Dorsolateral prefrontal cortex (tissue), 120 donors: ENCODE measurements at regions of chr6 and their contacts with region 1.

Region 1: GRCh38 chr6:36094753-36095496 is 35.4 kb upstream of the MAPK13 start:
- DNase-seq: peak; percentile 75 to 89 (median 82)
- H3K4me3 ChIP-seq: peak overlapping the region in 10 of 59 donors; percentile 3 to 34 (median 17)
- H3K27ac ChIP-seq: peak overlapping the region in 19 of 59 donors; percentile 0 to 71 (median 29)
- H3K27me3 ChIP-seq: no peaks in the 10 kb centered on the region
- CTCF ChIP-seq: peak; percentile 93 to 99 (median 98)

Region 2: DNA sequence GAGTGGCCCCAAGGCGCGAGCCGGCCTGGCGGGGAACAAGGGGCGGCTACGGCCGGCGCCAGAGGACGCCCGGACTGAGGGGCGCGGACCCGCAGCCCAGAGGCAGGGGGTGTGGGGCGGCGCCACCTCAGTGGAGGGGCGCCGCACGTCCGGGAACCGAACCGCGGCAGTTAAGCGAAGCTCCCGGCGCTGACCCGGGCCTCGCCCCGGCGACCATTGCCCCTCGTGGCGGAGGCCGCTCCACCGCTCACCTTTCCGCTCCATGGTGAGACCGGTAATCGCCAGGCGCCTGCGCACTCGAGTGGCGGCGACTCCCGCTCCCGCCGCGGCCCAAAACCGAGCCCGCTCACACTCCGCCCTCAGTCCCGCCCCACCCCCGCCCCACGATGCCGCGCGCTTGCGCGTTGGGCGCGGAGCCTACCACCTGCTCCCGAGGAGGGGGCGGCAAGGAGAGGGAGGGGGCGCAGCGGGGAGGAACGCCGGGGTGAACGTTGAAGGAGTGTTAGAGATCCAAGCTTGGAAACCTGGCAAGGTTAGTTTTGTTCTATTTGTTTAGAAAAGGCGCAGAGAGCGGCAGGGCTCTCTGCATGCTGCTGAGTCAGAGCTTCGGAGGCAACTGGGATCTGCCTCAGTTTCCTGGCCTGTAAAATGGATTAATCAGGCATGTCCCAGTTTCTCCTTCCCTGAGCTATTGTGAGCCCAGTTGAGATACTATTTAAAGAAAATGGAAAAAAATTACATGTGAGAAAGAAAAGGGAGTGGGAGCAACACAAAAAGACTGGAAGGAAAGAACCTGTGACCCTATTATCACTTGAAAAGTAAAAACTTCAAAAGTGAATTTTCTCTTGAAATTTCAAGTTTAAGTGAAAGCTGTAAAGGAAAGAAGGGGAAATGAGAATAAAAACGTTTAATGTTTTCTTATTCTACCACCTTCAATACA is 173.9 kb before region 1 on chr6 and contains the start of gene SRPK1:
- intact Hi-C with region 1: loop called (anchors 10 kb)
- DNase-seq: peak; percentile 75 to 93 (median 85)
- H3K4me3 ChIP-seq: peak within 1 kb of the TSS; percentile 56 to 98 (median 85)
- H3K27ac ChIP-seq: peak within 1 kb of the TSS in 58 of 59 donors; percentile 15 to 92 (median 78)
- H3K27me3 ChIP-seq: no peaks in the 10 kb centered on the region
- CTCF ChIP-seq: peak in 19 of 56 donors; percentile 8 to 40 (median 24)
- total RNA-seq, gene SRPK1: 32.2 to 80.3 (median 53.7) TPM